HepG2 (cell line): ENCODE measurements at regions of chr1 and their contacts with region 1.

Region 1: DNA sequence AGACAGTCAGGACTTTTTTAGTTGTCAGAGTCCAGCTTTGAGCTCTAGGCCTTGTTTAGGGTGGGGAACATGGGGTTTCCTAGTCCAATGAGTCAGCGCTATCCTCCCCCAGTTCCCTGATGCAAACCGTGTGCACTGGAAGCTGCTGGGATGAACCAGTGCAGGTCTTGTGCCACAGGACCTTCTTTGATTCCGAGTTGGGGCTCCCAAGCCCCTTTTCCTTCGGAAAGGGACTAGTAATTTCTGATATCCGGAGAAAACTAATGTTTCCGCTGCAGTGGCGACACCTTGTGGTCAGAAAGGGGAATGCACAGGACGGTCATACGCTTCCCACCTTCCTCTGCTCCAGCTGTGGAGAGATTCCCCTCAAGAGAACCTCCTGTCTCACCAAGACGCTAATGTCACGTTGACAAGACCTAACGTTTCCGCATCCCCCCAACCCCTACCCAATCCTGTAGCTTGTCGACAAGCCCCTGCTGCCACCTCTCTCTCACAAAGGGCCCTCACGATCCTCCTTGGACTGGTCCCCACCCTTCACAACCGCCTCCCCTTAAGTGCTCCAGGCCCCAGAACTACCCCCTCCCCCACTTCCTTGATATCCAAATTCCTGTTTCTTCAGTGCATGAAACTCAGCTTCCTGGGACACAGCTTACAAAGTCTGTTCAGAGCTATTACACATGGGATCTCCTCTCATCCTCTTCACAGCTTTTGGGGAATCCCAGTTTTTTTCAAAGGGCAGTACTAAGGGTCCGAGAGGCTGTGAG is 30.9 kb downstream of the GPA33 start:
- DNase-seq: peak; percentile 45
- ATAC-seq: peak; percentile 58
- H3K4me3 ChIP-seq: peak overlapping the region in 2 of 3 experiments; percentile 12 to 51; a peak in 2 of 6 replicates
- H3K27ac ChIP-seq: no peak overlapping the region
- H3K4me1 ChIP-seq: 0 out of 2 replicates have a peak, but pooled peaks cover 12% of the 10 kb centered on the region
- H3K27me3 ChIP-seq: peaks cover 3 to 13% of the 10 kb centered on the region in 2 experiments; a peak in 3 of 5 replicates
- CTCF ChIP-seq: peak; percentile 89
- EP300 ChIP-seq: no peak
- POLR2A ChIP-seq: no peak
- RAD21 ChIP-seq: peak; percentile 72

Region 2: DNA sequence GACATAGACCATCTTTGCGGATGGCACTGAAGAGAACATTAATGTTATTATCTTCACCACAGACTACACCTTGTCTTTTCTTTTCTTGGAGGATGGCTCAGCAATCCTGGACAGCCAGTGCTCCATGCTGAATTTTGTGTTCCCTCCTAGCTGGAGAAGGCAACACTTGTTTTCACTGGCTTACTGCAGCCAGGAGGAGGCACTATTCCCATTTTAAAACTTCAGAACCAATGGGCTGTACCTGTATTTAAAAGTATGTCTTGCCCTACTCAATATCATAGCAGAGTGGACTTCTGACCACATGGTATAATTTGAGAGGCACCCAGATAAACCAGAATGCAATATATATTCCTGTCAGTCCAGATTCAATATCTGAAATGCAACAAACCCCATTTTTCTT is 273.2 kb before region 1 on chr1:
- CTCF ChIA-PET with region 1: no interaction called
- POLR2A ChIA-PET with region 1: no interaction called
- in situ Hi-C with region 1: no loop called
- intact Hi-C with region 1: loop called (anchors 5 kb)
- DNase-seq: no peak
- ATAC-seq: no peak
- H3K4me3 ChIP-seq: no peak overlapping the region
- H3K27ac ChIP-seq: no peak overlapping the region
- H3K4me1 ChIP-seq: no peaks in the 10 kb centered on the region
- H3K27me3 ChIP-seq: no peaks in the 10 kb centered on the region
- CTCF ChIP-seq: peak; percentile 34
- EP300 ChIP-seq: no peak
- POLR2A ChIP-seq: no peak
- RAD21 ChIP-seq: no peak

Region 3: GRCh38 chr1:166910396-166910994 is 148.7 kb before region 1 on chr1:
- CTCF ChIA-PET with region 1: interaction called, 75 read pairs
- POLR2A ChIA-PET with region 1: no interaction called
- in situ Hi-C with region 1: loop called (anchors 5 kb)
- intact Hi-C with region 1: loop called (anchors 1 kb)
- DNase-seq: peak; percentile 80
- ATAC-seq: peak; percentile 97
- H3K4me3 ChIP-seq: no peak overlapping the region
- H3K27ac ChIP-seq: no peak overlapping the region
- H3K4me1 ChIP-seq: no peaks in the 10 kb centered on the region
- H3K27me3 ChIP-seq: no peaks in the 10 kb centered on the region
- CTCF ChIP-seq: peak; percentile 86
- EP300 ChIP-seq: no peak
- POLR2A ChIP-seq: no peak
- RAD21 ChIP-seq: peak; percentile 69

Region 4: GRCh38 chr1:167033646-167034045 is 25.6 kb before region 1 on chr1:
- CTCF ChIA-PET with region 1: no interaction called
- POLR2A ChIA-PET with region 1: no interaction called
- in situ Hi-C with region 1: no loop called
- intact Hi-C with region 1: no loop called
- DNase-seq: no peak
- ATAC-seq: no peak
- H3K4me3 ChIP-seq: no peak overlapping the region
- H3K27ac ChIP-seq: no peak overlapping the region
- H3K4me1 ChIP-seq: no peaks in the 10 kb centered on the region
- H3K27me3 ChIP-seq: no peaks in the 10 kb centered on the region
- CTCF ChIP-seq: no peak
- EP300 ChIP-seq: no peak
- POLR2A ChIP-seq: no peak
- RAD21 ChIP-seq: no peak

Region 5: DNA sequence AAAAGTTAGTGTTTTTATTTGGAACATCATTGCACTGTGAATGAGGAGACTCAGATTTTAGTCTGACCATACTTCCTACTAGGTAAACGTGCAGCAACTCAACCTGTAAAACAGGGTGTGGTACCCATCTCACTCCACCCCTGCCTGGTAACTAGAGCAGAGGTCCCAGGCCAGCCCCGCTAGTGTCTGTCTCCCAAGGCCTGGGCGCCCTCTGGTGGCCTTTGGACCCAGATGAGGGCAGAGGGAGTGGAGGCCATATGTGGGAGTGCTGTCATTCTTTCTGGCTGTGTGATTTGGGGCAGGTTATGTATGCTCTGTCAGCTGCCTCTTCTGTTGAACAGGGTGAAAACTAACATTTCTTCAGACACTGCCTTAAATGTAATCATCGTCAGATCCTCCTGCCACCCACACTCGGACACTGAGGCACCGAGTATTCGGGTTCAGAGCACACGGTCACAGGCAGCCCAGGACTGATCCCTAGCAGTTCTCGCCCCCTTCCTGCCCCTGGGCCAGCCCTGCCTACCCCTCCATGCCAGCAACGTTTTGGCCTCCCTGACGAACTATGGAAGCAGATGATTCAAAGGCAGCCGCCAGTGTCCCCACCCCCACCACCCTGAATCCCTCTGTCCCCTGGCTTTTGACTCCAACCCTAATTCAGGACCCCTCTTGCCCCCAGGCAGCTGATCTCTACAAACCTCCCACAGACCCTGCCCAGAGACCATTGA is 383.1 kb after region 1 on chr1:
- CTCF ChIA-PET with region 1: no interaction called
- POLR2A ChIA-PET with region 1: no interaction called
- in situ Hi-C with region 1: no loop called
- intact Hi-C with region 1: no loop called
- DNase-seq: peak; percentile 70
- ATAC-seq: peak; percentile 95
- H3K4me3 ChIP-seq: peak overlapping the region in 1 of 3 experiments; percentile 36; a peak in 1 of 6 replicates
- H3K27ac ChIP-seq: no peak overlapping the region
- H3K4me1 ChIP-seq: peaks cover 20% of the 10 kb centered on the region
- H3K27me3 ChIP-seq: peaks cover 0 to 32% of the 10 kb centered on the region in 2 experiments; a peak in 2 of 5 replicates
- CTCF ChIP-seq: peak; percentile 97
- EP300 ChIP-seq: no peak
- POLR2A ChIP-seq: no peak
- RAD21 ChIP-seq: peak; percentile 87